Heart left ventricle (tissue), 16 donors: ENCODE measurements at regions of chr14 and their contacts with region 1.

Region 1: GRCh38 chr14:89040460-89041259 is 216.2 kb downstream of the TTC8 start:
- DNase-seq: peak; percentile 85 to 93 (median 90)
- ATAC-seq: peak; percentile 90 to 98 (median 96)
- H3K4me3 ChIP-seq: peak overlapping the region; percentile 5 to 63 (median 50)
- H3K27ac ChIP-seq: peak overlapping the region; percentile 51 to 88 (median 72)
- H3K4me1 ChIP-seq: peaks cover 0 to 17% (median 8%) of the 10 kb centered on the region in 12 donors
- H3K27me3 ChIP-seq: no peaks in the 10 kb centered on the region
- CTCF ChIP-seq: peak; percentile 91 to 98 (median 96)
- POLR2A ChIP-seq: no peak

Region 2: GRCh38 chr14:88929656-88930425 is 110.8 kb before region 1 on chr14:
- intact Hi-C with region 1: no loop called
- DNase-seq: no peak
- ATAC-seq: no peak
- H3K4me3 ChIP-seq: no peak overlapping the region
- H3K27ac ChIP-seq: no peak overlapping the region
- H3K4me1 ChIP-seq: no peaks in the 10 kb centered on the region
- H3K27me3 ChIP-seq: no peaks in the 10 kb centered on the region
- CTCF ChIP-seq: no peak
- POLR2A ChIP-seq: no peak

Region 3: DNA sequence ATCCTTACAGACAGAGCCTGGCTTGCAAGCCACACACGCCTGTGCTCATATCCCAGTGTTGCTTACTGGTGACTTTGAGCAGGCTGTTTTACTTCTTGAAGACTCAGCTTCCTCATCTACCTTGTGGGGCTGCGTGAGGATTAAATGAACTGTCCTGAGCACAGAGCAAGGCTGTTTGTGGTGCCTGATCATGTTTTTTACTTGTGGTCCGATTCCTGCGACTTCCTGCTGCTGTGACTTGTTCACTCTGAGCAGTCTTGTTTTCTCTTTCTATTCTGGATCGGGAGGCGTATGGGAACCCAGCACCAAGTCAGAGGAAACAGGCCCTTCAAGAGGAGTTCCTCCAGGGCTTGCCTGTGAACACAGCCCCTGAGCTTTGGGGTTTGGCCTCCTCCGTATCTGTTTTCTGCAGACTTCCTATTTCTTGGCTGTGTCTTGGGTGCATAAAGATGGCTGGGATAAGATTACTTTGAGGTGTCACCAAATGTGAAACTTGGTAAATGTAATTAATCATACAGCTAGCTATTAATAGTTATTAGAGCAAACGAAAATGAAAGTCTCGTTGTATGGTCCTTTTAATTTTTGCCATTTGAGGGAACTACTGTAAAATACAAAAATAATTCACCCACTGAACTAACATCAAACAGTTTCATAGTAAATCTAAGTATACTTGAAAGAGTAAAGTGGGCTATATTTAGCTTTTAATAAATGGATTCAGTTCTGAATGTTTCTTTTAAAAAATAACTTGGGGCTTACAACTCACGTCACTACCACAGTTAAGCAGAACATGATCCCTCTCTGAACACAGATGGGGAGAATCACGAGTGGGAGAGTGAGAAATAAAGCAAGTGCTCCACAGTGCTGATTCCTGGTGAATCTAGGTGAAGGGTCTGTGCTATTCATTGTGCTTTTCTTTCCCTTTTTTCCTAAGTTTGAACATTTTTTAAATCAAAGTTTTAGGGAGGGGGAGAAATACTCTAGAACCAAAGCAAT is 124.8 kb after region 1 on chr14:
- intact Hi-C with region 1: loop called in 4 of 10 experiments (anchors 5 to 10 kb)
- DNase-seq: no peak
- ATAC-seq: peak; percentile 48 to 68 (median 60)
- H3K4me3 ChIP-seq: peak overlapping the region in 10 of 12 donors; percentile 0 to 45 (median 24)
- H3K27ac ChIP-seq: peak overlapping the region in 10 of 12 donors; percentile 23 to 90 (median 41)
- H3K4me1 ChIP-seq: peaks cover 0 to 35% (median 24%) of the 10 kb centered on the region in 12 donors
- H3K27me3 ChIP-seq: no peaks in the 10 kb centered on the region
- CTCF ChIP-seq: no peak
- POLR2A ChIP-seq: no peak

Region 4: DNA sequence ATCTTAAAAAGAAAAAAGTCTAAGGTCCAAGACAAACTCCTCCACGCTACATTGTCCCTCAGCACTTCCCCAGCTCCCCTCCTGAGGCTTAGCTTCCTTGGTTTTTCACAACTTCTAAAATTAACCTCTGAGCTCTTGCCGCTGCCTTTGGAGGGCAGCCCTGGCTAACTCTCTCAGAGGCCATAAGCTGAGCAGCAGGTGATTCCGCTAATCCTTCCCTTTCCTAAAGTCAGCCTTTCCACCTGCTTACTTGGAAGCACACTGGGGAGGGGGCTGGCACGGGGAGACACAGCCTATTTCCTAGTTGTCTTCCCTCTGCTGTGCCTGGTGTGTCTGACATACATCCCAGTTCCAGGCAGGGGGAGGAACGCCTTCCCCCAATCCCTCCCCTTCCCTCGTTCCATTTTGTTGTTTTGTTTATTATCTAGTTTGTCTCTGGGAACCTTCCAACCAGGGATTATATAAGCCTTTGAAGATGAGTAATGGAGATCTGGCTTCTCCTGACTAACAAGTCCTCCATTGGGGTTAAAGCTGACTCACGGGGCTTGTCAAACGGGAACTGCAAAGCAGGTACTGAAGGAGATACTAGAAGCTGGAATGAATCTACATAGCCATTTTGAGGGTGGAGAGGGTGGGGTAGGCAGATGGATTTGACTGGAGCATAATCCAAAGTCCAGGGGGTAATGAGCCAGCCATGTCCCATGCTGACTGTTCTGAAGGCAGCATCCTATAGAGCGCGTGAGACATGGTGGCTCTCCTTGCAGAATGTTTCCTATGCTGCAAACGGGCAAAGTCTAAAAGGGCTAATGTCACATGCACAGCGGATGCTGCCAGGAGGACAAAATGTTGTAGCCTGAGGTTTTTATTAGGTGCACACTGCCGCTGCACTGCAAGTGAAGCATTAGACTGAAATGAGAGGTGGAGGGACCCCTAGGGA is 145.5 kb after region 1 on chr14:
- intact Hi-C with region 1: loop called in 2 of 10 experiments (anchors 5 to 10 kb)
- DNase-seq: no peak
- ATAC-seq: peak; percentile 61 to 76 (median 69)
- H3K4me3 ChIP-seq: no peak overlapping the region
- H3K27ac ChIP-seq: peak overlapping the region in 11 of 12 donors; percentile 50 to 80 (median 68)
- H3K4me1 ChIP-seq: peaks cover 4 to 47% (median 35%) of the 10 kb centered on the region in 12 donors
- H3K27me3 ChIP-seq: no peaks in the 10 kb centered on the region
- CTCF ChIP-seq: peak in 1 of 12 donors; percentile 25
- POLR2A ChIP-seq: no peak

Region 5: GRCh38 chr14:89399594-89400068 is 359.0 kb after region 1 on chr14:
- intact Hi-C with region 1: loop called in 1 of 10 experiments (anchors 10 kb)
- DNase-seq: no peak
- ATAC-seq: peak in 3 of 4 donors; percentile 58 to 63 (median 59)
- H3K4me3 ChIP-seq: peak overlapping the region in 6 of 12 donors; percentile 10 to 42 (median 14)
- H3K27ac ChIP-seq: peak overlapping the region in 4 of 12 donors; percentile 4 to 53 (median 10)
- H3K4me1 ChIP-seq: peaks cover 3 to 54% (median 32%) of the 10 kb centered on the region in 12 donors
- H3K27me3 ChIP-seq: no peaks in the 10 kb centered on the region
- CTCF ChIP-seq: no peak
- POLR2A ChIP-seq: no peak

Region 6: DNA sequence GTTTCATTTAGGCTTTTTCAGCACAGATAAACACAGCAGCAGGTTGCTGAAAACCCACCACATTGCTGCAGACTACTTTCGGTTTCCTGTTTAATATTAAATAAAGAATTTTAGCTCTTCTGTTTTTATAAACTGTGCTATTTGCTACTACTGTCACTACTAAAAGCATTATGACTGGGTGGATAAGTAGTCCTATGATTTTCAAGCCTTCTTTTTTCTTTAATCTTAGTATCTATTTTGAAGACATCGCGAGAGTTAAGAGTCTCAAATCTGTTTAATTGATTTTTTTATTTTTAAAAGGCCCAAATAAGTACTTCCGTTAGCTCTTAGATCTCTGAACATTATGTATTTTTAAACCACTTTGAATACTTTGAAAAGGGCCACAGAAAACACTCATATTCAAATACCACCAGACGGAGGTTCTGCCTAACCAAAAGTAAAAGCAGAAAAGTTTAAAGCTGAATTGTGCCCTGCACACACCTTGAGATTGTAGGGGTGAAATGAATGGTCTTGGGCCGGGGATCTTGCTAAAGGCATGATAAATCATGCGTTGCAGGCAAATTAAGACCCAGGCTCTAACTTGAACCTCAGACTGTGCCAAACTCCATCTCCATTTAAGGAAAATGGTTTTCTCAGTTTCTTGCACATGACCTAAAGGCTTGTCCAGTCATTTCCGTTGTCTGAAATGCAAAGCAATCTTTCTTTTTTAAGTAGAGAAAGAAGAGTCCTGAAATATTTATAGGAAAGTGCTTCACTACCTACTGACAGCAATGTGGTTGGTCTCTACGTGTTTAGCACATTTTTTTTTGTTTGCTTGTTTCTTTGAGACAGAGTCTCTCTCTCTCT is 390.0 kb after region 1 on chr14:
- intact Hi-C with region 1: loop called in 1 of 10 experiments (anchors 10 kb)
- DNase-seq: no peak
- ATAC-seq: peak in 3 of 4 donors; percentile 25 to 53 (median 38)
- H3K4me3 ChIP-seq: peak overlapping the region in 11 of 12 donors; percentile 2 to 54 (median 37)
- H3K27ac ChIP-seq: peak overlapping the region; percentile 28 to 93 (median 64)
- H3K4me1 ChIP-seq: peaks cover 8 to 46% (median 36%) of the 10 kb centered on the region in 12 donors
- H3K27me3 ChIP-seq: no peaks in the 10 kb centered on the region
- CTCF ChIP-seq: no peak
- POLR2A ChIP-seq: no peak

Region 7: DNA sequence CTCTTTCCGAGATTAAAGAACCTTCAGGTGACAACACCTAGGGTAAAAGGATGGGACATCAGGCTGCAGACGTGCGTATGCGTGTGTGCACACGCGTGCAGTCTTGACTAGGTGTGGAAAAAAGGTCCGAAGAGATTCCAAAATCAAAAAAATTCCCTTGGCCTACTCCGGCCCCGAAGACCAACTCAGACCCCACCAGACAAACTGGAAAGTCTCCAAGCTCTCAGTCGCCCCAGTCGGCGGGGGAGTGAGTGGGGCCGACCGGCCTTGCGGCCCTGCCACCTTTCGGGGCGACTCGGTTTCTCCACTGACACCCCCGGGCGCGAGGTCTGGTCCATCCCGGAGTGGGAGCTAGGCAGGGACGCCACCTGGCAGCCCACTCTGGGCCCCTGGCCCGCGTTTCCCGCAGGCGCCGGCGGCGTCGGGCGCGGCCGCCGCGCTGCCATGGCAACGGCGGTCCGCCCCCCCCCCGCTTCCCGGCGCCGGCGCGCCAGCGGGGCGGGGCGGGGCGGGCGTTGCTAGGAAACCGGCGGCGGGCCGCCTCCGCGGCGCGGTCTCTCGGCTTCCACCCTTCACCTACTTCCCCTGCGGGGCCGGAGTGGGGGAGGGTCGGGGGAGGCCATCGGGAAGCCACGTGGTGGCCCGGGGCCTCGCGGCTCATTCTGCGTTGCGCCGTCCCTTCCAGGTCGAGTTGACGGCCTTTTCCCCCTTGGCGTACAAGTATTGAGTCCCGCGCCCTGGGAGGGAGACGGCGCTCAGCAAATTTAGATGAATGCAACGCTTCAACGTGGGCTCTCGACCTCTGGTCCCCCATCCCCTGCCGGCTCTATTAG is 660.8 kb after region 1 on chr14:
- intact Hi-C with region 1: loop called in 1 of 10 experiments (anchors 5 kb)
- DNase-seq: peak; percentile 91 to 97 (median 92)
- ATAC-seq: peak; percentile 89 to 97 (median 95)
- H3K4me3 ChIP-seq: peak overlapping the region; percentile 54 to 77 (median 66)
- H3K27ac ChIP-seq: peak overlapping the region; percentile 48 to 92 (median 78)
- H3K4me1 ChIP-seq: peaks cover 0 to 20% (median 12%) of the 10 kb centered on the region in 12 donors
- H3K27me3 ChIP-seq: no peaks in the 10 kb centered on the region
- CTCF ChIP-seq: no peak
- POLR2A ChIP-seq: peak in 1 of 2 donors; percentile 12

Region 8: DNA sequence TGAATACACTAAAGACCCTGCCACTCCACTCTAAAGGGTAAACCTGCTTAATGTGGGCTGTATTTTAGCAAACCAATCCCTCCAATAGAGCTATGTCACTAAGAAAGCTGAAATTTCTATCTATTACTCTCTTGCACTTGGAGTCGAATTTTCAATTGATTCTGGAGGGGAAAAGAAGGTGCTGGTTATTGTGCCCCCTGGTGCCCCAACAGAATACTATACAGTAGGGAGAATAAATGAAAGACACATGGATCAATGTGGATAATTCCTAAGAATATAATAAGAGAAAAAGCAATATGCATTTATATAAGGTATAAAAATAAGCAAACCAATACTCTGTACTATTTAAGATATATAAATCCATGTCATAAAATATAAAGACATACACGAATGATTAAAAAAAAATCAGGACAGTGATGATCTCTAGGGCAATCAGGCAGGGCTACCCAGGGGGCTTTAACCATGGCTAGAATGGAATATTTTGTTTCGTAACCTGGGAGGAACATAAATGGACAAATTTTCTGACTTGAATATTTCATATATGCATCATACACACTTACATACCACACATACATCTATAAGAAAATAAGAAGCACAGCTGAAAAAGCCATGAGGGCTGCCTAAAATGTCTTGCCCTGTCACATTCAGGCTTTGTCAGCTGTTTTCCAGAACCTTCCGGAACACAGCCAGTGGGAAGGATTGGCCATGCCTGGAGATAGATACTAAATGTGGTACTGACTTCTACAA is 859.4 kb after region 1 on chr14:
- intact Hi-C with region 1: loop called in 5 of 10 experiments (anchors 1 to 5 kb)
- DNase-seq: no peak
- ATAC-seq: peak in 2 of 4 donors; percentile 39 to 67
- H3K4me3 ChIP-seq: no peak overlapping the region
- H3K27ac ChIP-seq: no peak overlapping the region
- H3K4me1 ChIP-seq: peaks cover 0 to 10% (median 0%) of the 10 kb centered on the region in 12 donors
- H3K27me3 ChIP-seq: no peaks in the 10 kb centered on the region
- CTCF ChIP-seq: peak; percentile 33 to 68 (median 53)
- POLR2A ChIP-seq: no peak